ENCODE measurements at regions of chr5 and their contacts with region 1.

Region 1: GRCh38 chr5:134176511-134177368 is at the start of gene SKP1:
- DNase-seq: peak; percentile 81 to 94 (median 91)
- H3K4me3 ChIP-seq: peak within 1 kb of the TSS; percentile 71 to 89
- H3K4me3 Mint-ChIP-seq: peak within 1 kb of the TSS; percentile 98 to 99 (median 98)
- H3K27ac ChIP-seq: peak within 1 kb of the TSS; percentile 97
- H3K27ac Mint-ChIP-seq: peak within 1 kb of the TSS; percentile 97 to 99 (median 98)
- H3K4me1 ChIP-seq: peaks cover 41% of the 10 kb centered on the region
- H3K4me1 Mint-ChIP-seq: peaks cover 21 to 46% (median 30%) of the 10 kb centered on the region in 4 donors
- H3K27me3 ChIP-seq: no peaks in the 10 kb centered on the region
- H3K27me3 Mint-ChIP-seq: no peaks in the 10 kb centered on the region
- total RNA-seq, gene SKP1: 234 to 246 TPM

Region 2: GRCh38 chr5:134119720-134120119 is 57.0 kb before region 1 on chr5:
- CTCF ChIA-PET with region 1: no interaction called
- POLR2A ChIA-PET with region 1: interaction called, 20 read pairs
- intact Hi-C with region 1: no loop called
- DNase-seq: no peak
- H3K4me3 ChIP-seq: peak overlapping the region; percentile 82 to 85
- H3K4me3 Mint-ChIP-seq: peak overlapping the region; percentile 86 to 99 (median 96)
- H3K27ac ChIP-seq: peak overlapping the region; percentile 97
- H3K27ac Mint-ChIP-seq: peak overlapping the region; percentile 89 to 98 (median 96)
- H3K4me1 ChIP-seq: peaks cover 77% of the 10 kb centered on the region
- H3K4me1 Mint-ChIP-seq: peaks cover 35 to 90% (median 53%) of the 10 kb centered on the region in 4 donors
- H3K27me3 ChIP-seq: no peaks in the 10 kb centered on the region
- H3K27me3 Mint-ChIP-seq: no peaks in the 10 kb centered on the region

Region 3: DNA sequence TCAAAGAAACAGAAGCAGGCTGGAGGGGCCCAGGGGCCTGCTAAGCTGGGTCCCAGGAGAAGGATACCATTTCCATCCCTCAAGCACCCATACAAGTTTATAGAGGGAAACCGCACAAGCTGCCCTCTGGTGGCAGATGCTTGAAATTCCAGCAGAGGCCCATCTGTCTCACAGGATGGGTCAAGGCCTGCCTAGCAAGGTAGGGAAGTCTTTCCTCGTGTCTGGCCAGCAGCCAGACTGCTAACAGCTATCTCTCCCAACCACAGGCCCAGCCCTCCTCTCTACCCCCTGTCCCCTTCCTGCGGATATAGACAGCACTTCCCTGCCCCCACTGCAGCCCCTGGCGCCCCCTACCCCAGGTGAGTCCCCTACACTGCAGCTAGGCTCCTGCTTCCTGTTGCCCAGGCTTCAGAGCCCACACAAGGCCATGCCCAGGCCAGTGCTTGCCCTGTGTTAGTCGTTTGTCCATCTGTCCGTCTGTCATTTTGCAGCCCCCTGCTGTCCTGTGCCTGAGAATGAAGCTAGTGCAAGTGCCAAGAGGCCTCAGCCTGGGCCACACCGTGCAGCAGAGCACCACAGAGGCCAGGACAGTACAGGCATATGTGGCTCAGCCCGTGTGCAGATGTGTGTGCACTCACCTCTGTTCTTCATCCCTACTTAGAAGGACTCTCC is 36.1 kb before region 1 on chr5:
- CTCF ChIA-PET with region 1: no interaction called
- POLR2A ChIA-PET with region 1: interaction called, 10 read pairs
- intact Hi-C with region 1: no loop called
- DNase-seq: peak; percentile 52 to 70 (median 57)
- H3K4me3 ChIP-seq: no peak overlapping the region
- H3K4me3 Mint-ChIP-seq: peak overlapping the region in 2 of 8 donors; percentile 20 to 24
- H3K27ac ChIP-seq: peak overlapping the region; percentile 97
- H3K27ac Mint-ChIP-seq: peak overlapping the region; percentile 64 to 98 (median 86)
- H3K4me1 ChIP-seq: peaks cover 59% of the 10 kb centered on the region
- H3K4me1 Mint-ChIP-seq: peaks cover 24 to 84% (median 59%) of the 10 kb centered on the region in 4 donors
- H3K27me3 ChIP-seq: no peaks in the 10 kb centered on the region
- H3K27me3 Mint-ChIP-seq: no peaks in the 10 kb centered on the region

Region 4: DNA sequence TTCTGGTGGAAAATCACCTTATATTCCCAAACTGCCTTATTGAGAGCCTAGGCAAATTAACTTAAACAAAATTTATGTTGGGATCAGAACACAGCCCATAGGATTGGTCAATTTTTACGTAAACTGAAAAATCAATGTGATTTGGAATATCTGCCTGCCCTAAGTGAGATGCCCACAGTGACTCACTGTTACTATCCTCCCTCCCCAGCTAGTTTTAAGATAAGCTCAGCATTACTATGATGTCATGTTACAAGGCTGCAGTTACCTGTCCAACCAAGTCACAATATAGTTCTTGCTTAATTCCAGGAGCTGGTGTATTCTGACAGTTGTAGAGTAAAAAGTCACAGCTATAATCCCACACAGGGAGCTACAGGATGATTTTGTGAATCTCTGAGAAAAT is 23.1 kb before region 1 on chr5:
- CTCF ChIA-PET with region 1: interaction called, 4 read pairs
- POLR2A ChIA-PET with region 1: interaction called, 115 read pairs
- intact Hi-C with region 1: loop called (anchors 2 kb)
- DNase-seq: no peak
- H3K4me3 ChIP-seq: no peak overlapping the region
- H3K4me3 Mint-ChIP-seq: peak overlapping the region in 2 of 8 donors; percentile 33 to 44
- H3K27ac ChIP-seq: no peak overlapping the region
- H3K27ac Mint-ChIP-seq: peak overlapping the region; percentile 13 to 83 (median 62)
- H3K4me1 ChIP-seq: peaks cover 64% of the 10 kb centered on the region
- H3K4me1 Mint-ChIP-seq: peaks cover 51 to 82% (median 67%) of the 10 kb centered on the region in 4 donors
- H3K27me3 ChIP-seq: no peaks in the 10 kb centered on the region
- H3K27me3 Mint-ChIP-seq: no peaks in the 10 kb centered on the region

Region 5: DNA sequence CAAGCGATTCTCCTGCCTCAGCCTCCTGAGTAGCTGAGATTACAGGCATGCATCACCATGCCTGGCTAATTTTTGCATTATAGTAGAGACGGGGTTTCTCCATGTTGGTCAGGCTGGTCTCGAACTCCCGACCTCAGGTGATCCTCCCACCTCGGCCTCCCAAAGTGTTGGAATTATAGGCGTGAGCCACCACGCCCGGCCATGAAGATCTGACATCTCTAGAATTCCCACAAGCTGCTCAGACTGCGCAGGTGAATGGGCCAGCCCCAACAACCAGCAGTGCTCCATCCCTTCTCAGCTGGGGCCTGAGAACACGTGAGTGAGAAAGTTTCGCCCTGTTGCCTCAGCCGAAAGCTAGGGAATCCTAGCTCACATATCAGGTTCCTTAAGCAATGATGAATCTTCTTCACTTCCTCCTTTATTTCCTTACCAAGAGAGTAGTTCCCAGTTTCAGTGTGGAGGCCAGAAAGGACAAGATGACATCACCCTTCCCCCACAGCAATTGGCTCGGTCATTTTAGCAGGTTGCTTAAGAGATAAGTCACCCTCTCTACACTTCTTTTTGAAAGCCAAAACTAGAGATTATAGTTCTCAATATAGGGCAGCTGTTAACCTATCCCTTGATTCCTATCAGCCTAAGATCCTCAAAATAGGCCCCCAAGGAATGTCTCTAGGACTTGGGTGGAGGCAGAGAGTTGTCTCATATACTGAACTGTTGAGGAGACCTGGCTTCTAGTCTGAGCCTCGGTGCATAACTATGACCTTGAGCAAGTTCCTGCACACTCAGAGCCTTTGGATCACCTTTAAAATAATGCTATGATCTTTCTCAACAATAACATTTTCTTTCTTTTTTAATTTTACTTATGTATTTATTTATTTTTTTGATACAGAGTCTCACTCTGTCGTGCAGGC is 73.0 kb after region 1 on chr5:
- CTCF ChIA-PET with region 1: no interaction called
- POLR2A ChIA-PET with region 1: no interaction called
- intact Hi-C with region 1: no loop called
- DNase-seq: no peak
- H3K4me3 ChIP-seq: no peak overlapping the region
- H3K4me3 Mint-ChIP-seq: no peak overlapping the region
- H3K27ac ChIP-seq: no peak overlapping the region
- H3K27ac Mint-ChIP-seq: no peak overlapping the region
- H3K4me1 ChIP-seq: no peaks in the 10 kb centered on the region
- H3K4me1 Mint-ChIP-seq: no peaks in the 10 kb centered on the region
- H3K27me3 ChIP-seq: no peaks in the 10 kb centered on the region
- H3K27me3 Mint-ChIP-seq: no peaks in the 10 kb centered on the region

Region 6: DNA sequence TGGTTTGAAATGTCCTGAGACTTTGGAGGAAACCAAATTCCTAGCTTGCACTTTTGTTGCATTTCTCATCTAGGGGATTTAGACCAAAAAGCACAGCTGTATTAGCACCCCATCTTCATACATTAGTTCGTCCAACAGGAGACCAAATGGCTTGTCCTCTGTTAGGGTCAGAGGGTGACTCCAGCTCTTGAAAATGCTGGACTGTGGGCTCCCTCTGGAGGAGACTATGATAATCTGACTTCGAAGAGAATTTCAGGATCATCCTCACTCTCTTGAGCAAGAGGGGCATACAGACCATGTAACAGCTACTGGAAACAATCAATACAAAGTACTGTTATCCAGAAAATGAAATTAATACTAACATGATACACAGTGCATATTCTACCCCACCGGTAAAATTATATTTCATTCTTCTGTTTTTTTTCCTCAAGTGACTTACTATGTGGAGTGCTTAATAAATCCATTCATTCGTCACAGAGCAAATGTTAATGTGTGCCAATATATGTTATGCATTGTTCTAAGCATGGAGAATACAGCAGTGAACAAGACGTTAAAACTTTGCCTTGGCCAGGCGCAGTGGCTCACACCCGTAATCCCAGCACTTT is 112.9 kb after region 1 on chr5:
- CTCF ChIA-PET with region 1: interaction called, 178 read pairs
- POLR2A ChIA-PET with region 1: interaction called, 8 read pairs
- intact Hi-C with region 1: loop called (anchors 2 kb)
- DNase-seq: peak; percentile 50 to 55 (median 52)
- H3K4me3 ChIP-seq: no peak overlapping the region
- H3K4me3 Mint-ChIP-seq: no peak overlapping the region
- H3K27ac ChIP-seq: no peak overlapping the region
- H3K27ac Mint-ChIP-seq: peak overlapping the region in 2 of 7 donors; percentile 17 to 32
- H3K4me1 ChIP-seq: no peaks in the 10 kb centered on the region
- H3K4me1 Mint-ChIP-seq: no peaks in the 10 kb centered on the region
- H3K27me3 ChIP-seq: no peaks in the 10 kb centered on the region
- H3K27me3 Mint-ChIP-seq: peaks cover 3 to 5% of the 10 kb centered on the region in 2 donors

Measured in CD4-positive, alpha-beta memory T cell (primary cell).